Activated naive CD4-positive, alpha-beta T cell treated with anti-CD3 and anti-CD28 coated beads, Interleukin-2, amount 10 ng/mL, durations not matched to agents 7 days and 5 days (primary cell): ENCODE measurements at regions of chr7 and their contacts with region 1.

Region 1: DNA sequence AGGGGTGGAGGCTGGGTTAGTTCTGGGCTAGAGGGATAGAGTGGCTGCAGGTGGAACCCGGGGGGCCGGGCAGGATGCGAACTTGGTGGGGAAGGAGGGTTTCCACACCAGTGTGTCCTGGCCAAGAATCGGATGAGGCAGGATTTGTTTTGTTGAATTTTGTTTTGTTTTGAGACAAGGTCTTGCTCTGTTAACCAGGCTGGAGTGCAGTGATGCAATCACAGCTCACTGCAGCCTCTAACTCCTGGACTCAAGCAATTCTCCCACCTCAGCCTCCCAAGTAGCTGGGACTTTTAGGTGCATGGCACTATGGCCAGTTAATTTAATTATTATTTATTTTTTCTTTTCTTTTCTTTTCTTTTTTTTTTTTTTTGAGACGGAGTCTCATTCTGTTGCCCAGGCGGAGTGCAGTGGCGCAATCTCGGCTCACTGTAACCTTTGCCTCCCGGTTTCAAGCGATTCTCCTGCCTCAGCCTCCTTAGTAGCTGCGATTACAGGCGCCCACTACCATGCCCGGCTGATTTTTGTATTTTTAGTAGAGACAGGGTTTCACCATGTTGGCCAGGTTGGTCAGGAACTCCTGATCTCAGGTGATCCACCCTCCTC is 13.0 kb upstream of the PPP1R35 start:
- DNase-seq: no peak
- H3K4me3 Mint-ChIP-seq: peak overlapping the region; percentile 33
- H3K27ac Mint-ChIP-seq: no peak overlapping the region
- H3K4me1 Mint-ChIP-seq: peaks cover 37% of the 10 kb centered on the region
- H3K27me3 Mint-ChIP-seq: peaks cover 11% of the 10 kb centered on the region

Region 2: GRCh38 chr7:99562832-99563231 is 886.5 kb before region 1 on chr7:
- CTCF ChIA-PET with region 1: no interaction called
- DNase-seq: peak; percentile 34
- H3K4me3 Mint-ChIP-seq: no peak overlapping the region
- H3K27ac Mint-ChIP-seq: peak overlapping the region; percentile 15
- H3K4me1 Mint-ChIP-seq: peaks cover 42% of the 10 kb centered on the region
- H3K27me3 Mint-ChIP-seq: no peaks in the 10 kb centered on the region

Region 3: GRCh38 chr7:100435401-100436304 is 13.6 kb before region 1 on chr7:
- CTCF ChIA-PET with region 1: interaction called, 11 read pairs
- DNase-seq: peak; percentile 68
- H3K4me3 Mint-ChIP-seq: peak overlapping the region; percentile 88
- H3K27ac Mint-ChIP-seq: peak overlapping the region; percentile 98
- H3K4me1 Mint-ChIP-seq: peaks cover 52% of the 10 kb centered on the region
- H3K27me3 Mint-ChIP-seq: no peaks in the 10 kb centered on the region

Region 4: DNA sequence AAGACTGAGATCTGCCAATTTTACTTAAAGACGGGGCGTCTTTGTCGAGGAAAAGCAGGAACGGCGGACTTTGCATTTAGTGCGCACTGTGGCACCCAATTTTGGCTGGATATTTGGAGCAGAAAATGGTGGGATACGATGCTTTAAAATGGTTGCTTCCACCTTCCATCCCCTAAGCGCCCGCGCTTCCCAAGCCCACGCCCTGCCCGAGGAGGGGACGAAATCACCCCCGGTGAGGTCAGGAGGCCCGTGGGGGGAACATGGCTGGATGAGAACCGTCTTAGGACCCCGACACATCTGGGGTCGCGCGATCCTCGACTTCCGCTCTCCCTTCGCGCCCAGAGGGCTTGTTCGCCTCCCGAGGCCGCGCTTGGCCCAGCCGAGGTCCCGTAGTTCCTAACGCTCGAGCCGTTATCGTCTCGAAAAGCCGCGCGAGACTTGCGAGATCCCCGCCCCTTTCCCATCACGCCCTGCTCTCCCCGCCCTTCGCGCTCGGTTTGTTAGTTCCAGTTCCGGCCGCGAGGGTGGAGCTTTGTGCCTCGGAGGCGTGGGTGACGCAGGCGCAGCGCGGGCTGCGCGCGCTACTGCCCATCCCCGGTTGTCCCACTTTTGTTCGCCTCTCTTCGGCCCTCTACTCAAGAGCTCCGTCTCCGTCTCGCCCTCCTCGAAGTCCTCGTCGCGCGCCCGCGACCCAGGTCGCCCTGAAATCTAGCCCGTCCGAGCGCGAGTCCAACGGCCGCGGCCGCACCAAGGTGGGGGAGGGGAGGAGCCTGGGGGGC is 425.5 kb after region 1 on chr7 and contains the start of gene SRRT:
- CTCF ChIA-PET with region 1: no interaction called
- DNase-seq: peak; percentile 99
- H3K4me3 Mint-ChIP-seq: peak within 1 kb of the TSS; percentile 97
- H3K27ac Mint-ChIP-seq: peak within 1 kb of the TSS; percentile 98
- H3K4me1 Mint-ChIP-seq: peaks cover 55% of the 10 kb centered on the region
- H3K27me3 Mint-ChIP-seq: peaks cover 6% of the 10 kb centered on the region